ENCODE measurements at regions of chr1 and their contacts with region 1.

Region 1: DNA sequence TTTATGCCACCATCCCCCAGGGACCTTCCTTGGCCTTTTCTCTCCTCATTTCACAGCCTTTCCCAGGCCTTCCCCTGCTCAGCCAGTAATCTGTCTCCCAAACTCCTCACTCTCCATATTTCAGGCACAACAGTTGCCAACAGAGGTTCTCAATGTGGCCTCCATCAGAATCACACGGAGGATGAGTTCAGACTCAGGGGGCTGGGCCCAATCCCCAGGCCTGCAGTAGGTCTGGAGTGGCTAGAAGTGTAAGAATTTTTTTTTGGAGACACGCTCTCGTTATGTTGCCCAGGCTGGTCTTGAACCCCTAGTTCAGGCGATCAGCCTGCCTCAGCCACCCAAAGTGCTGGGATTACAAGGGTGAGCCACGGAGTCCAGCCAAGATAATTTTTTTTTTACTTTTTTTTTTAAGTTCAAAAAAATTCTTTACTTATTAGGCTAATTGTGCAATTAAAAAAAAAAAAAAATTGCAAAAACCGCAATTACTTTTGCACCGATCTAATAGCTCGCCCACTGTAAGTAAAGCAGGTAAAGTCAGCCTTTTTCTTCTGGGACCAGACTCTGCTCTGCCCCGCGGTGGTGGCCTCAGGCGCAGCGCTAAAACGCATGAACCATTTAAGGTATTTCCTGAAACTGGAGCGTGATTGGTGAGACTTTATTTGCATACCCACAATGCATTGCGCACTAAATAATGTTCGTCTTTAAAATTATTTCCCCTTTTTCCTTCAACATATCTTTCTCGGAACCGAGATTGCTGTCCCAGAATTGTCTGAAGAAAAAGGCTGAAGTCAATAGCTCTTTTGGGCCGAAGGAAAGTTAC is 18.7 kb downstream of the KIAA2013 start:
- DNase-seq: peak; percentile 85
- ATAC-seq: peak; percentile 70
- H3K4me3 ChIP-seq: no peak overlapping the region
- H3K27ac ChIP-seq: peak overlapping the region; percentile 100
- H3K4me1 ChIP-seq: no peaks in the 10 kb centered on the region
- H3K27me3 ChIP-seq: no peaks in the 10 kb centered on the region
- CTCF ChIP-seq: peak; percentile 59 to 71 (median 66); a peak in 5 of 6 replicates
- EP300 ChIP-seq: no peak
- POLR2A ChIP-seq: no peak
- RAD21 ChIP-seq: peak; percentile 48; the same call in 1 of the 2 replicates

Region 2: GRCh38 chr1:11805447-11806306 is 101.8 kb before region 1 on chr1 and contains the starts of genes CLCN6 and MTHFR:
- CTCF ChIA-PET with region 1: no interaction called
- POLR2A ChIA-PET with region 1: interaction called, 16 read pairs
- RAD21 ChIA-PET with region 1: no interaction called
- SMC1A ChIA-PET with region 1: interaction called, 4 read pairs
- in situ Hi-C with region 1: no loop called
- intact Hi-C with region 1: no loop called
- DNase-seq: peak; percentile 97
- ATAC-seq: peak; percentile 86
- H3K4me3 ChIP-seq: peak within 1 kb of the TSS; percentile 97
- H3K27ac ChIP-seq: peak within 1 kb of the TSS; percentile 88
- H3K4me1 ChIP-seq: peaks cover 11% of the 10 kb centered on the region
- H3K27me3 ChIP-seq: no peaks in the 10 kb centered on the region
- CTCF ChIP-seq: no peak
- EP300 ChIP-seq: peak; percentile 39 to 72; a peak in 3 of 4 replicates
- POLR2A ChIP-seq: peak; percentile 89
- RAD21 ChIP-seq: no peak
- polyA plus RNA-seq, gene CLCN6: 2.2 to 2.4 TPM
- polyA plus RNA-seq, gene MTHFR: 1.0 to 1.2 TPM

Region 3: GRCh38 chr1:11934302-11935056 is 27.0 kb after region 1 on chr1 and contains the start of gene PLOD1:
- CTCF ChIA-PET with region 1: interaction called, 7 read pairs
- POLR2A ChIA-PET with region 1: interaction called, 37 read pairs
- RAD21 ChIA-PET with region 1: interaction called, 4 read pairs
- SMC1A ChIA-PET with region 1: interaction called, 5 read pairs
- in situ Hi-C with region 1: no loop called
- intact Hi-C with region 1: no loop called
- DNase-seq: peak; percentile 65
- ATAC-seq: peak; percentile 99
- H3K4me3 ChIP-seq: peak within 1 kb of the TSS; percentile 89
- H3K27ac ChIP-seq: peak within 1 kb of the TSS; percentile 90
- H3K4me1 ChIP-seq: peaks cover 22% of the 10 kb centered on the region
- H3K27me3 ChIP-seq: no peaks in the 10 kb centered on the region
- CTCF ChIP-seq: no peak
- EP300 ChIP-seq: no peak
- POLR2A ChIP-seq: peak; percentile 85
- RAD21 ChIP-seq: no peak
- polyA plus RNA-seq, gene PLOD1: 10.6 to 11.5 TPM

Region 4: GRCh38 chr1:12019858-12020509 is 112.5 kb after region 1 on chr1:
- CTCF ChIA-PET with region 1: interaction called, 3 read pairs
- POLR2A ChIA-PET with region 1: interaction called, 13 read pairs
- RAD21 ChIA-PET with region 1: interaction called, 10 read pairs
- SMC1A ChIA-PET with region 1: interaction called, 6 read pairs
- in situ Hi-C with region 1: no loop called
- intact Hi-C with region 1: no loop called
- DNase-seq: no peak
- ATAC-seq: peak; percentile 17
- H3K4me3 ChIP-seq: peak overlapping the region; percentile 88
- H3K27ac ChIP-seq: peak overlapping the region; percentile 86
- H3K4me1 ChIP-seq: peaks cover 4% of the 10 kb centered on the region; the same call in 1 of the 2 replicates
- H3K27me3 ChIP-seq: no peaks in the 10 kb centered on the region
- CTCF ChIP-seq: no peak
- EP300 ChIP-seq: no peak
- POLR2A ChIP-seq: no peak
- RAD21 ChIP-seq: no peak

Region 5: GRCh38 chr1:12052008-12052573 is 144.6 kb after region 1 on chr1:
- CTCF ChIA-PET with region 1: no interaction called
- POLR2A ChIA-PET with region 1: interaction called, 6 read pairs
- RAD21 ChIA-PET with region 1: interaction called, 3 read pairs
- SMC1A ChIA-PET with region 1: no interaction called
- in situ Hi-C with region 1: no loop called
- intact Hi-C with region 1: loop called (anchors 2 kb)
- DNase-seq: peak; percentile 96
- ATAC-seq: peak; percentile 79
- H3K4me3 ChIP-seq: peak overlapping the region; percentile 45; the same call in 1 of the 2 replicates
- H3K27ac ChIP-seq: peak overlapping the region; percentile 100
- H3K4me1 ChIP-seq: peaks cover 93% of the 10 kb centered on the region
- H3K27me3 ChIP-seq: no peaks in the 10 kb centered on the region
- CTCF ChIP-seq: no peak
- EP300 ChIP-seq: peak; percentile 79 to 95
- POLR2A ChIP-seq: peak; percentile 56; the same call in 1 of the 2 replicates
- RAD21 ChIP-seq: peak; percentile 19

Measured in GM12878 (cell line).